H1 (cell line): ENCODE measurements at regions of chr15 and their contacts with region 1.

Region 1: DNA sequence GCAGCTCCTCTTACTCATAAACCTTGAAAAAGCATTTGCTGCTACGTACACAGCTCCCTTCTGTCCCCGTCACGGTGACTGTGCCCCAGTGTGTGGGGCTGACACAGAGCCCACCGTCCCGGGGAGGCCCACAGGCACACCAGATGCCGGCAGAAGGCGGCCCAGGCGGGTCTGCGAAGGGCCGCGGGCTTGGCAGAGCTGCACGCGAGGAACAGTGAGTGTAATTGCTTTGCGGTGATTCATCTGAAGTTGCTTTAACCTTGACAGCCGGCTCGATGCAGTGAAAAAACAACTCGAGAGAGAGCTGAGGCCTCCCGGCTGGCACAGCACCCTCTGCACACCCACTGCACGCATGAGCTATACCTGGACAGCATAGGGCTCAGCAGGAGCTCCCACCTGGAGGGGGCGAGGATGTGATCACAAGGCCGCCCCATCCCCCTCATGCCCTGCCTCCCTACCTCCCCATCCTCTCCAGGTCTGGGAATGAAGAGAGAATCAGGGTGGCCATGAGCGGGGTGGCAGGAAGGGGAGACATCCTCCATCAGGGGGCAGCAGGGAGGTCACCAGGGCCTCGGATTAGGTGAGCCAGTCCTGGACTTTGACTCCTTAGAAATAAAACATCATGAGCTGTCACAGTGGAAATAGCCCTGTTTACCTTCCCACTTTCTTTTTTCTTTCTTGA is 172.7 kb downstream of the MEGF11 start:
- DNase-seq: peak in 1 of 2 experiments; percentile 76
- H3K4me3 ChIP-seq: no peak overlapping the region
- H3K27ac ChIP-seq: no peak overlapping the region
- H3K4me1 ChIP-seq: peaks cover 0 to 3% (median 1%) of the 10 kb centered on the region in 4 experiments; a peak in 3 of 7 replicates
- H3K27me3 ChIP-seq: no peaks in the 10 kb centered on the region
- CTCF ChIP-seq: peak; percentile 57 to 81 (median 69)
- EP300 ChIP-seq: no peak
- POLR2A ChIP-seq: no peak
- RAD21 ChIP-seq: peak; percentile 48 to 60

Region 2: GRCh38 chr15:66046751-66047150 is 34.1 kb before region 1 on chr15:
- CTCF ChIA-PET with region 1: interaction called, 13 read pairs
- POLR2A ChIA-PET with region 1: no interaction called
- DNase-seq: no peak
- H3K4me3 ChIP-seq: no peak overlapping the region
- H3K27ac ChIP-seq: no peak overlapping the region
- H3K4me1 ChIP-seq: peaks cover 7 to 15% (median 8%) of the 10 kb centered on the region in 4 experiments
- H3K27me3 ChIP-seq: no peaks in the 10 kb centered on the region
- CTCF ChIP-seq: peak in 1 of 3 experiments; percentile 23; a peak in 1 of 4 replicates
- EP300 ChIP-seq: no peak
- POLR2A ChIP-seq: no peak
- RAD21 ChIP-seq: peak; percentile 28 to 46; a peak in 3 of 4 replicates

Region 3: GRCh38 chr15:66057089-66057488 is 23.8 kb before region 1 on chr15:
- CTCF ChIA-PET with region 1: interaction called, 15 read pairs
- POLR2A ChIA-PET with region 1: no interaction called
- DNase-seq: no peak
- H3K4me3 ChIP-seq: no peak overlapping the region
- H3K27ac ChIP-seq: no peak overlapping the region
- H3K4me1 ChIP-seq: peaks cover 0 to 7% (median 2%) of the 10 kb centered on the region in 4 experiments; a peak in 4 of 7 replicates
- H3K27me3 ChIP-seq: no peaks in the 10 kb centered on the region
- CTCF ChIP-seq: no peak
- EP300 ChIP-seq: no peak
- POLR2A ChIP-seq: no peak
- RAD21 ChIP-seq: no peak

Region 4: DNA sequence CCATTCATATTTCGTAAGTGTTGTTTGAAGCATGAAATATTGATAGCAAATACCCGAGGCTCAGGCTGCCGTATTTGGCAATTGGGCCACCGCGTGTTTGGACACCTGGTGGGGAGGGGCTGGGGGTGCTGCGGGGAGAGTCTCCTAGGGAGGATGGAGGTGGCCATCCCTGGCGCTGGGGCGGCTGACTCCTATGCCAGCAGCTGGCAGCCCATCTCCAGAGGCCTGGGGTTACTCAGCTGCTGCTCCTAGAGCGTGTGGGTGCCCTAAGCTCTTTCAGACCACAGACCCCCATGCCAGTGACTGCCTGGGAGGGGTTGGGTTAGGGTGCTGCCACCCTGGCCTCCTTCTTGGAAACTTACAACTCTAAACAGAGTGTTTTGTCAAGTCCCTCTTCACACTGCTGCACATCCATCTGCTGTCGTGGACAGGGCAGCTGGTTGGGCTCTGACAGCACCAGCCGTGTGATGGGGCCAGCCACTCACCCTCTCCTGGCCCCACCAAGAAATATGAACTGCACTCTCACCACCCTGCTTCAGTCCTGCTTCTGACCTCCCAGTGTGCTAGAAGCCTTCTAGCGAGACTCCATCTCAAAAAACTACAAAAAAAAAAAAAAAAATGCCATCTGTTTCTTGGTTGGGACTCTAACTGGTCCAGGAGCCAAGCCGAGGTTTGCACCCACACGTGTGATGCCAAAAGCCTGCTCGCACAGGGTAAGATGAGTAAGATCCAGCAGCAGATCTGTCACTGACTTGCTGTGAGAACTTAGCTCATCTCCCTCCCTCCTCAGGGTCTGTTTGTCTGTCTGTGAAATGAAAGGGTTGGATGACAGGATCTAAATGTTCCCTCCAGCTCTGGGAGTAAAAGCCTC is 16.5 kb after region 1 on chr15:
- CTCF ChIA-PET with region 1: interaction called, 16 read pairs
- POLR2A ChIA-PET with region 1: no interaction called
- DNase-seq: no peak
- H3K4me3 ChIP-seq: no peak overlapping the region
- H3K27ac ChIP-seq: no peak overlapping the region
- H3K4me1 ChIP-seq: peaks cover 9 to 19% (median 11%) of the 10 kb centered on the region in 4 experiments
- H3K27me3 ChIP-seq: no peaks in the 10 kb centered on the region
- CTCF ChIP-seq: no peak
- EP300 ChIP-seq: no peak
- POLR2A ChIP-seq: no peak
- RAD21 ChIP-seq: no peak

Region 5: GRCh38 chr15:66108483-66109265 is 27.8 kb after region 1 on chr15:
- CTCF ChIA-PET with region 1: interaction called, 10 read pairs
- POLR2A ChIA-PET with region 1: no interaction called
- DNase-seq: no peak
- H3K4me3 ChIP-seq: no peak overlapping the region
- H3K27ac ChIP-seq: no peak overlapping the region
- H3K4me1 ChIP-seq: peaks cover 0 to 8% (median 5%) of the 10 kb centered on the region in 4 experiments; a peak in 5 of 7 replicates
- H3K27me3 ChIP-seq: no peaks in the 10 kb centered on the region
- CTCF ChIP-seq: no peak
- EP300 ChIP-seq: no peak
- POLR2A ChIP-seq: no peak
- RAD21 ChIP-seq: no peak

Region 6: GRCh38 chr15:66287461-66288057 is 206.7 kb after region 1 on chr15:
- CTCF ChIA-PET with region 1: no interaction called
- POLR2A ChIA-PET with region 1: no interaction called
- DNase-seq: no peak
- H3K4me3 ChIP-seq: no peak overlapping the region
- H3K27ac ChIP-seq: no peak overlapping the region
- H3K4me1 ChIP-seq: no peaks in the 10 kb centered on the region
- H3K27me3 ChIP-seq: no peaks in the 10 kb centered on the region
- CTCF ChIP-seq: peak in 2 of 3 experiments; percentile 28 to 39; a peak in 2 of 4 replicates
- EP300 ChIP-seq: no peak
- POLR2A ChIP-seq: no peak
- RAD21 ChIP-seq: peak in 1 of 2 experiments; percentile 57